ENCODE measurements at regions of chr22 and their contacts with region 1.

Region 1: GRCh38 chr22:46737976-46738646 is at the start of gene CERK:
- DNase-seq: peak; percentile 94
- H3K4me3 ChIP-seq: peak within 1 kb of the TSS; percentile 74 to 99 (median 94)
- H3K27ac ChIP-seq: peak within 1 kb of the TSS; percentile 89 to 97 (median 92)
- H3K4me1 ChIP-seq: peaks cover 61 to 76% (median 64%) of the 10 kb centered on the region in 4 donors
- H3K27me3 ChIP-seq: no peaks in the 10 kb centered on the region
- CTCF ChIP-seq: no peak
- EP300 ChIP-seq: no peak
- POLR2A ChIP-seq: peak; percentile 49
- total RNA-seq, gene CERK: 37.3 to 51.1 (median 48.0) TPM

Region 2: GRCh38 chr22:46576556-46577367 is 161.3 kb before region 1 on chr22:
- intact Hi-C with region 1: loop called (anchors 5 kb)
- DNase-seq: no peak
- H3K4me3 ChIP-seq: peak overlapping the region; percentile 59 to 93 (median 74)
- H3K27ac ChIP-seq: peak overlapping the region; percentile 62 to 72 (median 68)
- H3K4me1 ChIP-seq: peaks cover 55 to 71% (median 58%) of the 10 kb centered on the region in 4 donors
- H3K27me3 ChIP-seq: no peaks in the 10 kb centered on the region
- CTCF ChIP-seq: no peak
- EP300 ChIP-seq: no peak
- POLR2A ChIP-seq: no peak

Measured in esophagus muscularis mucosa (tissue), 4 donors.